ENCODE measurements at regions of chr13 and their contacts with region 1.

Region 1: DNA sequence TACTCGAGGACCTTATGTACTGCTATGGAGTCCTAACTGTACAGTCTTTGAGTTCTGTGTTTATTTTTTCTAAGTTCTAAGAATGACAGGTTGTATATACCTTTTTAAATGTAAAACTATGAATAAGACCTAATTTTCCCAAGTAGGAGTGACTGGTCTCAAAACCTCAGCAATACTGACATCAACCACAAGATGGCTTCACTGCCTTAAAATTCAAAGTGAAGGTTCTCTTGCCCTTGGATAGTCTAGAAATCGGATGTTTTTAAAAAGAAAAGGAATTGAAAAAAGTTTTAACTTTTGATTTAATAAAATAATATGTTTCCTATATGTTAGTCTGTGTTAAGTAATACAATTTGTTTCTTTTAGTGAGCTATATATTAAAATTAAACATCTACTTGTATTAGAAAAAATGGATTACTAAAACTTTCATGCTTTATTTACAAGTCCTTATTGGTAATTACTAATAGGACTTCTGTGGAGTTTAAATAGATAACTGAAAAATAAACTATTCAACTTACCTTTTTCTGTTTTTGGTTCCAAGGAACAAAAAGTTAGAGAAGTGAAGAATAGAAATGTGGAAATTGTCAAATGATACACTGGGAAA is 52.0 kb downstream of the TDRD3 start:
- DNase-seq: no peak
- ATAC-seq: peak; percentile 61
- H3K4me3 ChIP-seq: no peak overlapping the region
- H3K27ac ChIP-seq: no peak overlapping the region
- H3K4me1 ChIP-seq: no peaks in the 10 kb centered on the region
- H3K27me3 ChIP-seq: no peaks in the 10 kb centered on the region
- CTCF ChIP-seq: peak; percentile 67 to 73 (median 68)
- EP300 ChIP-seq: no peak
- POLR2A ChIP-seq: no peak
- RAD21 ChIP-seq: peak; percentile 82

Region 2: GRCh38 chr13:60617991-60618733 is 169.2 kb after region 1 on chr13:
- CTCF ChIA-PET with region 1: interaction called, 22 read pairs
- POLR2A ChIA-PET with region 1: no interaction called
- RAD21 ChIA-PET with region 1: interaction called, 6 read pairs
- SMC1A ChIA-PET with region 1: interaction called, 13 read pairs
- in situ Hi-C with region 1: no loop called
- intact Hi-C with region 1: no loop called
- DNase-seq: no peak
- ATAC-seq: peak; percentile 16; the same call in 1 of the 3 replicates
- H3K4me3 ChIP-seq: no peak overlapping the region
- H3K27ac ChIP-seq: no peak overlapping the region
- H3K4me1 ChIP-seq: no peaks in the 10 kb centered on the region
- H3K27me3 ChIP-seq: no peaks in the 10 kb centered on the region
- CTCF ChIP-seq: peak in 1 of 3 experiments; percentile 5; a peak in 1 of 6 replicates
- EP300 ChIP-seq: no peak
- POLR2A ChIP-seq: no peak
- RAD21 ChIP-seq: peak; percentile 26; the same call in 1 of the 2 replicates

Region 3: DNA sequence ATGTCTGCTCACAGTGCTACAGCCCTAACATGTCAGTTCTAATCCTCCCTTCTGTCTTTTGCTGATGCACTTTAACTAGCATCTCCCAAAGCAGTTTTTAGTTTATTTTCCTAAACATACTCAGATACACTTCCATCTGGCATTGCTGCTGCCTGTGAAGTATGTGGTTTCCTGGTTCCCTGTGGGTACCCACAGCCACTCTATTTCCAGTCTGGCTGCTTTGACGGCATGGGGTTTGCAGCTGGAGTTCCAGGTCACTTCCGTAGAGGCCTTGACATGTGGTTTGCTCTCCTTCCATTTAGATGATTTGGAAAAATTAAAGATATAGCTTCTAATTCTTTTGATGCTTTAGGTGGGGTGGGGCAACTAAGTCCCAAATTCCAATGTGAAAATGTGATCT is 591.2 kb after region 1 on chr13:
- CTCF ChIA-PET with region 1: no interaction called
- POLR2A ChIA-PET with region 1: no interaction called
- RAD21 ChIA-PET with region 1: no interaction called
- SMC1A ChIA-PET with region 1: no interaction called
- in situ Hi-C with region 1: no loop called
- intact Hi-C with region 1: no loop called
- DNase-seq: no peak
- ATAC-seq: no peak
- H3K4me3 ChIP-seq: no peak overlapping the region
- H3K27ac ChIP-seq: no peak overlapping the region
- H3K4me1 ChIP-seq: no peaks in the 10 kb centered on the region
- H3K27me3 ChIP-seq: no peaks in the 10 kb centered on the region
- CTCF ChIP-seq: no peak
- EP300 ChIP-seq: no peak
- POLR2A ChIP-seq: no peak
- RAD21 ChIP-seq: no peak

Measured in GM12878 (cell line).